Activated CD8-positive, alpha-beta T cell treated with anti-CD3 and anti-CD28 coated beads for 36 hours (primary cell): ENCODE measurements at regions of chr1 and their contacts with region 1.

Region 1: DNA sequence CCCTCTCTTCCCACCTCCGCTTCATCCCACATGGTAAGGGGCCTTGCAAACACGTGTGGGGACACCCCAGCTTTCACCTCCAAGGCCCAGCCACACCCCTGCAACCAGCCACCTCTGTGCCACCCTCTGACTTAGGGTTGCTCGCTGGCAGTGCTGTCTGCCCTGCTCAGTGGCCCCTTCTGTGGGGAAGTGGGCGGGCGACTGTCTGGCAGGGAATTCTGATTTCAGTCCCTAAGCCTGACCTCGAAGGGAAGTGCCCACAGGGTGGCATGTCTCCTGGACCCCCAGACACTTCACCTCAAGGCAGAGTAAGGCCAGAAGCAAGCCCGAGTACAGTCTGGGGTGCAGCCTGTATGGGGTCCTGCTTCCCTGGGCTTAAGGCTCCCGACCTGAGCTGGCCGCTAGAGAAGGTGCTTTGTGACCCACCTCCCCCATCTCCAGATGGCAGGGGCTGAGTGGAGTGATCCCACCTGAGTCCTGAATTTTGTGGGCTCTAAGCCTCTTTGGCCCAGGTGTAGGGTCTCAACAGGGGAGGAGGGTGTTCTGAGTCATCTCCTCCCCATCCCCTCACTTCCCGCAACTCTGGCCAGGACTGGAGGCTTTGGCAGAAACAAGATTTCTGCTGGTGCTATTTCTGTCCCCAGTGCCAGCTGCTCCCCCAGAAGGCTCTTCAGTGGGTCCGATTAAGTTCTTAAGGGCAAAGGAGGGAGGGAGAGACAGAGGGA is 7.0 kb downstream of the RD3 start:
- DNase-seq: no peak
- ATAC-seq: no peak
- H3K4me3 Mint-ChIP-seq: no peak overlapping the region
- H3K27ac Mint-ChIP-seq: no peak overlapping the region
- H3K4me1 Mint-ChIP-seq: no peaks in the 10 kb centered on the region
- H3K27me3 Mint-ChIP-seq: peaks cover under 1% of the 10 kb centered on the region
- CTCF ChIP-seq: no peak

Region 2: GRCh38 chr1:211469938-211470529 is 14.9 kb before region 1 on chr1:
- CTCF ChIA-PET with region 1: interaction called, 30 read pairs
- POLR2A ChIA-PET with region 1: no interaction called
- intact Hi-C with region 1: no loop called
- DNase-seq: peak; percentile 63
- ATAC-seq: peak; percentile 49
- H3K4me3 Mint-ChIP-seq: no peak overlapping the region
- H3K27ac Mint-ChIP-seq: no peak overlapping the region
- H3K4me1 Mint-ChIP-seq: no peaks in the 10 kb centered on the region
- H3K27me3 Mint-ChIP-seq: peaks cover 1% of the 10 kb centered on the region
- CTCF ChIP-seq: peak; percentile 83